Gastrocnemius medialis (tissue), 4 donors: ENCODE measurements at regions of chr19 and their contacts with region 1.

Region 1: DNA sequence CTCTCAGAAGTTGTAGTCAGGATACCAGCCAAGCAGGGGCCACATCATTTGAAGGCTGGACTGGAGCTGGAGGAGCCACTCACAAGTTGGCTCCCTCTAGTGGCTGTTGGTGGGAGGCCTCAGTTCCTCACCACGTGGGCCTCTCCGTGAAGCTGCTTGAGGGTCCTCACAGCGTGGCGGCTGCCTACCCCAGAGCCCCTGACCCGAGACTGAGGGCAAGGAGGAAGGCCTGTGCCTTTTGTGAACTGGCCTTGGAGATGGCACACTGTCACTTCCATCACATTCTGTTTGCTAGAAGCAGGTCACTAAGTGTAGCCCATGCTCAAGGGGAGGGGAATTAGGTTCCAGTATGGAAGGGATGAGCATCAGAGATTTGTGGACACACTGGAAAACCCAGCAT is 14.6 kb downstream of the GNA11 start:
- DNase-seq: peak in 1 of 2 donors; percentile 48
- ATAC-seq: peak in 1 of 2 donors; percentile 68
- H3K4me3 ChIP-seq: no peak overlapping the region
- H3K27ac ChIP-seq: no peak overlapping the region
- H3K4me1 ChIP-seq: peaks cover 7 to 39% of the 10 kb centered on the region in 2 donors
- H3K27me3 ChIP-seq: no peaks in the 10 kb centered on the region
- CTCF ChIP-seq: peak; percentile 52 to 84 (median 78)
- POLR2A ChIP-seq: no peak

Region 2: DNA sequence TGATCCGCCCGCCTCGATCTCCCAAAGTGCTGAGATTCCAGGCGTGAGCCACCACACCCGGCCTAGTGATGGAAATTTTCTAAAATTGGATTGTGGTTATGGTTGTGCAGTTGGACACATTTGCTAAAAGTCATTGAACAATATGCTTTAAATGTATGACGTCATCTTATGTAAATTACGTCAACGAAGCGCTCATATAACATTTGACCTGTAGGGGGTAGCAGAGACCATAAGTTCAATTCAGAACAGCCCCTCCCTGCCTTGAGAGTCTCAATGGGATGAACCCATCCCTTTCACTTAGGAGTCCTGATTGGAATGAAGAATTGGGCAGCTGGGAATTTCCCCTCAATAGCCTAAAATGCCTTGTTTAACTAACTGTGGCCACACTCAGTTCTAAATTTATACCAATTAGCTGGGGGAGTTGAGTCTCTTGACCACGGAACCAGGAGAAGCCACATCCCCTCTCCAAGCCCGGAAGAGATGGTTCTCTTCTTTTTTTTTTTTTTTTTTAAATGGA is 146.7 kb before region 1 on chr19:
- in situ Hi-C with region 1: loop called in 2 of 4 experiments (anchors 10 kb)
- intact Hi-C with region 1: loop called (anchors 2 kb)
- DNase-seq: peak in 1 of 2 donors; percentile 27
- ATAC-seq: peak; percentile 81 to 91
- H3K4me3 ChIP-seq: peak overlapping the region in 1 of 4 donors; percentile 31
- H3K27ac ChIP-seq: no peak overlapping the region
- H3K4me1 ChIP-seq: no peaks in the 10 kb centered on the region
- H3K27me3 ChIP-seq: no peaks in the 10 kb centered on the region
- CTCF ChIP-seq: peak; percentile 55 to 88 (median 75)
- POLR2A ChIP-seq: no peak

Region 3: DNA sequence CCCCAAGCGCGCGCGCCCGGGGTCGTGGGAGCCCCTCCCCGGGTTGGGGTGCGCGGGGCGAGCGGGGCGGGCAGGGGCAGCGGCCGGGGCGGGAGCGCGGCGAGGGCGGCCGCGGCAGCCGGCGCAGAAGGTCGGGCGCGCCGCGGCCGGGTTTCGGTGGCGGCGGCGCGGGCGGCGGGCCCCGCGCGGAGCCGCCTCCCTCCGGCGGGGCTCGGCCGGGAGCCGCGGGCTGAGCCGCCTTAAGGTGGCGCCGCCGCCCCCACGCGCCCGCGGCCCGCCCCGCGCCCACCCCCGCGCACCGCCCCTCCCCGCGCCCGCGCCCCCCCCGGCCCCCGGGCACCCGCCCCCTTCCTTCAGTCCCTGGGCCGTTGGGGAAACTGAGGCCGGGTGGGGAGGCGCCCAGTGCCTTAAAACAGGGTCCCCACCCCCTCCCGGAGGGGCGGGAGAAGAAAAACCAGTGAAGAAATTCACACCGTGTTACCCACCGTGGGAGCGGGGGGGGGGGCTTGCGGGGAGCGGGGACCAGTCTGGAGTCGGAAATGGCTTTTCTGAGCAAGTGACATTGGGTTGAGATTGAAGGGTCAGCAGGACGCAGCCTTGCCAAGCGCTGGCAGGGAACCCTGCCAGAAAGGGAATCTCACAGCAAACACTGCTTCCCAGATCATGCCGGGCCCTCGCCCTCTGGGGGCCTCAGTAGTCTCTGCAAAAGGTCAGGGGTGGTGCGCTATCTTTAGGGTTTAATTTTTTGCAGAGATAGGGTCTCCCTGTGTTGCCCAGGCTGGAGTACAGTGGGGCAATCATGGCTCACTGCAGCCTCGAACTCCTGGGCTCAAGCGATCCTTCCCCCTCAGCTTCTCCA is 79.5 kb before region 1 on chr19 and contains the start of gene TLE2:
- in situ Hi-C with region 1: no loop called
- intact Hi-C with region 1: loop called (anchors 5 kb)
- DNase-seq: no peak
- ATAC-seq: peak; percentile 52 to 73
- H3K4me3 ChIP-seq: peak within 1 kb of the TSS; percentile 67 to 79 (median 69)
- H3K27ac ChIP-seq: peak within 1 kb of the TSS; percentile 59 to 73 (median 66)
- H3K4me1 ChIP-seq: peaks cover 0 to 10% of the 10 kb centered on the region in 2 donors
- H3K27me3 ChIP-seq: no peaks in the 10 kb centered on the region
- CTCF ChIP-seq: no peak
- POLR2A ChIP-seq: no peak
- total RNA-seq, gene TLE2: 26.1 to 48.5 (median 45.2) TPM

Region 4: DNA sequence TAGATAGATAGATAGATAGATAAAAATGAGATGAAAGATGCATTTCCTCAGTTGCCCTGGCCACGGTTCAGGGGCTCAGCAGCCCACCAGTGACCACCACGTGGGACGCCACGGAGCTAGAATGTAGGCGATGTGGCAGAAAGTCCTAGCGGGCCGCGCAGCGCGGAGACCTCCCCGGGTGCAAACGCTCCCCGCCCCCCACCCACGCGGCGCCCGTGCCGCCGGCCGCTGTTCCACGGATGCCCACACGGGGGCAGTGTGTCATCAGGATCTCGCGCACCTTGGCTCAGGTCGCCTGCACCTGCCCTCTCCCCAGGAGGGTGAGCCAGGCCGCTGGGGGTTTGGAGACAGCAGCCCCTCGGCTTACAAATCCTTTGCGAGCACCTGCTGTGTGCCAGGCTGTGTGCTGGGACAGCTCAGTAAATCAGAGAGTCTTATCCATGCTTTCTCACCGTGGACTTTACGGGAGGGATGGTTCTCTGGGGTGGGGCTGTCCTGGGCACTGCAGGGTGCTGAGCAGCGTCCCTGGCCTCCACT is 32.8 kb before region 1 on chr19:
- in situ Hi-C with region 1: no loop called
- intact Hi-C with region 1: loop called (anchors 2 kb)
- DNase-seq: no peak
- ATAC-seq: peak; percentile 55 to 61
- H3K4me3 ChIP-seq: peak overlapping the region in 2 of 4 donors; percentile 13 to 26
- H3K27ac ChIP-seq: peak overlapping the region in 2 of 4 donors; percentile 3 to 70
- H3K4me1 ChIP-seq: peaks cover 9 to 11% of the 10 kb centered on the region in 2 donors
- H3K27me3 ChIP-seq: no peaks in the 10 kb centered on the region
- CTCF ChIP-seq: peak; percentile 76 to 98 (median 96)
- POLR2A ChIP-seq: no peak

Region 5: GRCh38 chr19:3094601-3095437 is 14.0 kb before region 1 on chr19:
- in situ Hi-C with region 1: no loop called
- intact Hi-C with region 1: no loop called
- DNase-seq: no peak
- ATAC-seq: no peak
- H3K4me3 ChIP-seq: peak overlapping the region; percentile 69 to 84 (median 78)
- H3K27ac ChIP-seq: peak overlapping the region; percentile 79 to 92 (median 85)
- H3K4me1 ChIP-seq: peaks cover 39 to 50% of the 10 kb centered on the region in 2 donors
- H3K27me3 ChIP-seq: no peaks in the 10 kb centered on the region
- CTCF ChIP-seq: no peak
- POLR2A ChIP-seq: no peak